ENCODE measurements at regions of chr20 and their contacts with region 1.

Region 1: DNA sequence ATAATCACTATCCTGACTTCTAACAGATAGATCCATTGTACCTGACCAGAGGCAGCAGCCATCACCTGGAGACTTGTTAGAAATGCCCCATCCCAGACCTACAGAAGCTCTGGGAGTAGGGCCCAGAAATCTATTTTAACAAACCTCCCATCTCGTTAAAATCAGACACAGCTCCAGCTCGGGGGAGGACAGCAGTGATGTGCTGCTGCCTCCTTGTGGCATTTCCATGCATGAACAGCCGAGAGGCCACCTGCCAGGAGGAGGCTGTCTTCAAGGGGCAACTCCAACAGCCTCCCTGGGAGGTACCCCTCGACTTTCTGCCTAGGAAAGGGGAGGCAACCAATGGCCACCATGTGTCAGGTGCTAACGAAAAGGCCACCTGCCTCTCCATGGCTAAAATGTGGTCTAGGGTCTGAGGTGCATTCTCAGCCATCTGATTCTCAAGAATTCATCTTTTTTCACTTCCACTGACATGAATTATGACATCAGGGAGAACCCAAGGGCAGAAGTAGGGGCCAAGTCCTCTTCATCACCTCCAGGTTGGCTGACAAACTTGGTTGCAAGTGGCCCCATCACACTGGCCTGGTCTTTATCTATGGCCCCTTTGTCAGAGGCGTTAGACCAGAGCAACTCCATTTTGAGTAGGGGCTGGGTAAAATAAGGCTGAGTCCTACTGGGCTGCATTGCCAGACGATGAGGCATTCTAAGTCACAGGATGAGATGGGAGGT is 12.2 kb upstream of the KCNK15 start:
- DNase-seq: peak; percentile 53 to 70
- ATAC-seq: peak; percentile 37 to 45
- H3K4me3 ChIP-seq: no peak overlapping the region
- H3K27ac ChIP-seq: no peak overlapping the region
- H3K4me1 ChIP-seq: peaks cover 30 to 36% of the 10 kb centered on the region in 2 donors
- H3K27me3 ChIP-seq: no peaks in the 10 kb centered on the region
- CTCF ChIP-seq: peak; percentile 94 to 98 (median 96)
- POLR2A ChIP-seq: no peak

Region 2: GRCh38 chr20:44532259-44532980 is 201.1 kb before region 1 on chr20:
- in situ Hi-C with region 1: loop called in 1 of 4 experiments (anchors 25 kb)
- intact Hi-C with region 1: loop called (anchors 5 kb)
- DNase-seq: no peak
- ATAC-seq: peak; percentile 28 to 38
- H3K4me3 ChIP-seq: peak overlapping the region; percentile 63 to 82 (median 78)
- H3K27ac ChIP-seq: peak overlapping the region; percentile 74 to 85 (median 77)
- H3K4me1 ChIP-seq: peaks cover 9 to 15% of the 10 kb centered on the region in 2 donors
- H3K27me3 ChIP-seq: no peaks in the 10 kb centered on the region
- CTCF ChIP-seq: no peak
- POLR2A ChIP-seq: no peak

Region 3: GRCh38 chr20:44861531-44862006 is 128.1 kb after region 1 on chr20:
- in situ Hi-C with region 1: no loop called
- intact Hi-C with region 1: no loop called
- DNase-seq: peak; percentile 18 to 48
- ATAC-seq: peak; percentile 78 to 88
- H3K4me3 ChIP-seq: no peak overlapping the region
- H3K27ac ChIP-seq: peak overlapping the region in 1 of 4 donors; percentile 11
- H3K4me1 ChIP-seq: peaks cover 6 to 9% of the 10 kb centered on the region in 2 donors
- H3K27me3 ChIP-seq: no peaks in the 10 kb centered on the region
- CTCF ChIP-seq: no peak
- POLR2A ChIP-seq: no peak

Measured in gastrocnemius medialis (tissue), 4 donors.